Activated CD8-positive, alpha-beta T cell treated with anti-CD3 and anti-CD28 coated beads, Interleukin-2, amount 10 ng/mL, durations not matched to agents 7 days and 5 days (primary cell): ENCODE measurements at regions of chr11 and their contacts with region 1.

Region 1: DNA sequence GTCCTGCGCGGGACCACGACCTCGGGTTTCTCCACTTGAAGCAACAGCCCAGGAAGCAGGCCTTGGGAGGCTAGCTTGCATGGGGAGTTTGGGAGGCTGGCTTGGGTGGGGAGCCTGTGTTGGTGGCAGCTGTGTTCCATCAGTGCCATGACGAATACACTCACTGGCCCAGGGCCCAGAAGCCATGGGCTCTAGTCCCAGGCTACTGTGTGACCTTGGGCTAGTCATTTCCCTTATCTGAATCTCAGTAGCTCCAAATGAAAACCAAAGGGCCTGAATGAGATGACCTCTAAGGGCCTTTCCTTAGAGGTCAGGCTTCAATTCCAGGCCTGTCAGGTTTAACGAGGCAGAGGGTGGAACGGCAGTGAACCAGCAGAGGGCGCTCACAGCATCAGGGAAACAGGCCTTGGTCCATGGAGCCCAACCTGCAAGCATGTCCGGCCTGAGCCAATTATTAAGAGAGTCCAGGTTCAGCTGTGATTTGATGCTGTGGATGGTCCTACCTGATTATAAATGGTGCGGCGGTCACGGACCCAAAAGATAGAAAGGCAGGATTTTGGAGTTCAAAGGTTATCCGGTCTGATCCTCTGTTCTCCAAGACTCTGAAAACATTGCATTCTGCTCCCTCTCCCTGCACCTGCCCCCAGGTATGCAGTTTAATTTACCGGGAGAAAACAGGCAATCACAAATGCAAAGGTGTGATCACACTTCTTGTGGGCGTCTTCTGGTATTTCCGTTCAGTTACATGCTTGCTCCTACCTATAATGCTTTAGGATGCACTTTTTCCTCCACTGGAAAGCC is 15.9 kb downstream of the PTPN5 start:
- DNase-seq: peak; percentile 78
- ATAC-seq: peak; percentile 79
- H3K4me3 Mint-ChIP-seq: no peak overlapping the region
- H3K27ac Mint-ChIP-seq: no peak overlapping the region
- H3K4me1 Mint-ChIP-seq: peaks cover 19% of the 10 kb centered on the region
- H3K27me3 Mint-ChIP-seq: peaks cover 3% of the 10 kb centered on the region

Region 2: DNA sequence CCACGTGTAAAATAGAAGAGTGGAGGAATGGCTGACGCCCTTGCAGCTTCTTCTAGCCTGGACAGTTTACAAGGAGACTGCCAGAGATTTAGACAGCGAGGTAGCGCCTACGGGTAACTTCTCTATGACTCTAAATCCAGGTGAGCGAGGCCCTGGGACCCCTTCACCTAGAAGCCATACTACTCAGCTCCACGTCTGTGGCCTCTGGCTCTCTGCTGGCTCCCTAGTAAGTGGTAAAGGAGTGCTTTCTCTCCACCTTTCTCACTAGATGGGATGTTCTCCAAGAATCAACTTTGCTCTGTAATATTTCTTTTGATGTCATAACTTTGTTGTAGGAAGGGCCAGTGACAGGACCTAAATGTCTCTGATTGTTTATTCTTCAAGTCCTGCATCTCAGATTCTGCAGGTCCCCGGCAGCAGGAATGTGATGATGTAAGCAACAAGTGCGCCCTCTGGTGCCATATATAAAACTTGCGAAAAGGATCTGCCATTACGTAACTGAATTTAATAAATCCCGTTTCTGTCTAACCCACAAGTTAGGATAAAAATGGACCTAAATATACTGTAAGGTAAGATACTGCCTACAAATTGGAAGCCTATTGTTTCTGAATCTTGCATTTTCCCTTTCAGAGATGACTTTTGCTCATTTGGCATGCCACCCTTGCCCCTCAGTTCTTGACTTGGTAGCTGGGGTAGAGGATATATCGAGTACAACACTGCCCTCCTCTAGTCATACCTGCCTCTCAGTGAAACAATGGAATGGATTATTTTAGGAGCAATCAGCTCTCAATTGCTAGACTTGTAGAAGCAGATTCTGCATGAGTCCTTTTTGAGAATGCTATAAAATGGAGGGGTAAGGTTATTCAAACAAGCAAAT is 26.9 kb after region 1 on chr11:
- CTCF ChIA-PET with region 1: interaction called, 15 read pairs
- POLR2A ChIA-PET with region 1: no interaction called
- DNase-seq: peak; percentile 56
- ATAC-seq: no peak
- H3K4me3 Mint-ChIP-seq: no peak overlapping the region
- H3K27ac Mint-ChIP-seq: no peak overlapping the region
- H3K4me1 Mint-ChIP-seq: no peaks in the 10 kb centered on the region
- H3K27me3 Mint-ChIP-seq: peaks cover 44% of the 10 kb centered on the region